Activated T-helper 2 cell treated with anti-CD3 and anti-CD28 coated beads, Interferon-gamma antibody, Interleukin-2, Interleukin-4, amounts not matched to agents 10 μg/mL and 5 μg/mL and 100 μg/mL, durations not matched to agents 14 hours and 24 hours and 36 hours (primary cell): ENCODE measurements at regions of chr12 and their contacts with region 1.

Region 1: GRCh38 chr12:121038861-121039666 is at the start of gene OASL:
- DNase-seq: peak; percentile 49
- H3K4me3 Mint-ChIP-seq: peak within 1 kb of the TSS; percentile 85
- H3K27ac Mint-ChIP-seq: peak within 1 kb of the TSS; percentile 73
- H3K4me1 Mint-ChIP-seq: peaks cover 43% of the 10 kb centered on the region
- H3K27me3 Mint-ChIP-seq: peaks cover 20% of the 10 kb centered on the region
- total RNA-seq, gene OASL: 1.9 and 2.3 TPM in 2 replicates

Region 2: DNA sequence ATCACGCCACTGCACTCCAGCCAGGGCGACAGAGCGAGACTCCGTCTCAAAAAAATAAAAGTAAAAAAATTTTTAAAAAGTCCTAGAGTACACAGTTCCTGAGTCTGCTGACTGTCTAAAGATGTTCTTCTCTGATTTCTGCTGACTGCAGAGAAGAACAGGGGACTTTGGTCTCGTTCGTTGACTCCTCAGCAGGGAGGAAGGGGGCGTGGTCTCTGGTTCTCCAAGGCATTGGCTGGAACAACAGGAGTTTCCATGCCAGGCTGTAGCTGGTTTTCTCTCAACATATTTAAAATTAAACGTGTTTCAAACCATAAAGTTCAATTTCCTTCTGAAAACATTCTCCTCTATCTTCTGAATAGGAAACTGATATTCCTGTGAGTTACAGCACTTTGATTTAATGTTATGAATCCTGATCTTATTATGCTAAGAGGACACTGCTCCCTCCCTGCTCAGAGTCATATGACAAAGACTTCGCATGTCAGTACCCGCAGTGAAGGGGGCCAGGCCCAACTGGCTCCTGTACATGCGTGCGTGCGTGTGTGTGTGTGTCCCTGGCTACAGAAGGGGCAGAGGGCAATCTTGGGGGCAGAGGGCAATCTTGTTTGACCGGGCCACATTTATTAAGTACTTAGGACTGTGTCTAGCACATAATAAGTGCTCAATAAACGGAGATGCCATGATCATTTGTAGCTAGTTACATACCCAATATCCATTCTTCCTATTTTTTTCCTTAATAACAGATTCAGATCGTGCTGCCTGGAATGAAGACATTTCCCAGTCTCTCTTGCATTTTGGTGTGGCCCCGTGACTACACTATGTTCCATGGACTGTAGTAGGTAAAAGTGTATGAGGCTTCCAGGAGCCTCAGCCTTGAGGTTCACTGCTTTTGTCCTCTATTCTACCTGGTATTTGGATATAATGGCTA is 77.2 kb before region 1 on chr12:
- intact Hi-C with region 1: no loop called
- DNase-seq: no peak
- H3K4me3 Mint-ChIP-seq: no peak overlapping the region
- H3K27ac Mint-ChIP-seq: peak overlapping the region; percentile 78
- H3K4me1 Mint-ChIP-seq: peaks cover 38% of the 10 kb centered on the region
- H3K27me3 Mint-ChIP-seq: no peaks in the 10 kb centered on the region

Region 3: GRCh38 chr12:121015825-121016766 is 23.0 kb before region 1 on chr12 and contains the start of gene C12orf43:
- intact Hi-C with region 1: loop called (anchors 1 kb)
- DNase-seq: peak; percentile 90
- H3K4me3 Mint-ChIP-seq: peak within 1 kb of the TSS; percentile 100
- H3K27ac Mint-ChIP-seq: peak within 1 kb of the TSS; percentile 98
- H3K4me1 Mint-ChIP-seq: peaks cover 10% of the 10 kb centered on the region
- H3K27me3 Mint-ChIP-seq: no peaks in the 10 kb centered on the region
- total RNA-seq, gene C12orf43: 26.3 and 30.3 TPM in 2 replicates

Region 4: GRCh38 chr12:121209624-121210572 is 170.8 kb after region 1 on chr12 and contains the start of gene P2RX4:
- intact Hi-C with region 1: loop called (anchors 5 kb)
- DNase-seq: peak; percentile 85
- H3K4me3 Mint-ChIP-seq: peak within 1 kb of the TSS; percentile 95
- H3K27ac Mint-ChIP-seq: peak within 1 kb of the TSS; percentile 97
- H3K4me1 Mint-ChIP-seq: peaks cover 32% of the 10 kb centered on the region
- H3K27me3 Mint-ChIP-seq: no peaks in the 10 kb centered on the region
- total RNA-seq, gene P2RX4: 25.1 and 25.2 TPM in 2 replicates